ENCODE measurements at regions of chr2 and their contacts with region 1.

Region 1: DNA sequence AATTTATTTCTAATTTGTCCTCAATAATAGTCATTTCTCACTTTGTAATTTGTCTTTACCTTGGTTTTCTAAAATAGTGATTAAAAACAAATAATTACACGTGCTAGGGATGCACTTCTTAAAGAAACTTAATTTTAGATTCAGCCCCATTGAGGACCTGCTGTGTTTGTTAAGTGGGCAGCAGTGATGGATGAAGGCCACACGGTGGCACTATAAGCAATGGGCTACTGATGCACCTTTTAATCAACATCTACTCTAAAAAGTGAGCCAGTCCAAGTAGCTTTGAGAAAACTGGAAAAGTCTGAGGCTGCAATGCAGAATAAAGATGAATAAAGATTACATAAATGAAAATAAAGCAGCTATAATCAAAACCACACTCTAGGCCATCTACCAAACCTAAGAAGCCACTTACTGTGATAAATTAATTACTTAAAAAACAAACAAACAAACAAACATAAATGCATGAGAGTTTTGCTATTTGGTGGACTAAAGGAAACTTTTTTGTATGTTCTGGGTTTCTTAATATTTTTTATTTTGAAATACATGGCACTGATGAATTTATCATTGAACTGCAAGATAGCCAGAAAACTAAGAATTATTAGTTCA is 89.3 kb downstream of the PDE11A start:
- DNase-seq: peak; percentile 36
- H3K4me3 ChIP-seq: no peak overlapping the region
- H3K27ac ChIP-seq: no peak overlapping the region
- H3K4me1 ChIP-seq: no peaks in the 10 kb centered on the region
- H3K27me3 ChIP-seq: peaks cover 4% of the 10 kb centered on the region
- CTCF ChIP-seq: peak; percentile 95 to 96

Region 2: GRCh38 chr2:177906041-177906718 is 77.1 kb before region 1 on chr2:
- CTCF ChIA-PET with region 1: no interaction called
- dilution Hi-C with region 1: no loop called
- in situ Hi-C with region 1: no loop called
- intact Hi-C with region 1: loop called (anchors 5 kb)
- DNase-seq: peak; percentile 45
- H3K4me3 ChIP-seq: no peak overlapping the region
- H3K27ac ChIP-seq: no peak overlapping the region
- H3K4me1 ChIP-seq: peaks cover 12% of the 10 kb centered on the region
- H3K27me3 ChIP-seq: no peaks in the 10 kb centered on the region
- CTCF ChIP-seq: peak; percentile 89 to 94

Region 3: DNA sequence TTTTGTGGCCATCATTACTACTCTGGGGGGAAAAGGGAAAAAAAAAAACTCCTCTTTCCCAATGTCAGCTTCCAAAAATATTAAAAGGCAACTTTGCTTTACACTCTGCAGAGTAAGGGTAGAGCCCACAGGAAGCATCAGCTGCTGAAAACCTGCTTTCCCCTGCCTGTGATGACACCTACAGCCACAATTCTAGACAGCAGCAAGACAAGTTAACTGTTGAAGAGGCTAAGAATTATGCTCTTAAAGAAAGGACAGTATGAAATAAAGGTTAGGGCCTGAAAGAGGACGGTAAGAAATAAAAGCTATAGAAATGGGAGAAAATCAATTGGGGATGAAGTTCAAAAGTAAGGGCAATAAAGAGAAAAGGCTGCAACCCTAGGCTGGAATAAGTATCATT is 86.3 kb after region 1 on chr2:
- CTCF ChIA-PET with region 1: no interaction called
- dilution Hi-C with region 1: no loop called
- in situ Hi-C with region 1: no loop called
- intact Hi-C with region 1: loop called (anchors 1 kb)
- DNase-seq: no peak
- H3K4me3 ChIP-seq: no peak overlapping the region
- H3K27ac ChIP-seq: no peak overlapping the region
- H3K4me1 ChIP-seq: peaks cover 18% of the 10 kb centered on the region
- H3K27me3 ChIP-seq: no peaks in the 10 kb centered on the region
- CTCF ChIP-seq: peak in 1 of 2 donors; percentile 21

Region 4: GRCh38 chr2:178112202-178113152 is 129.2 kb after region 1 on chr2 and contains the start of gene RBM45:
- CTCF ChIA-PET with region 1: no interaction called
- dilution Hi-C with region 1: no loop called
- in situ Hi-C with region 1: no loop called
- intact Hi-C with region 1: loop called (anchors 1 kb)
- DNase-seq: peak; percentile 95
- H3K4me3 ChIP-seq: peak within 1 kb of the TSS; percentile 74 to 85 (median 75)
- H3K27ac ChIP-seq: peak within 1 kb of the TSS; percentile 22
- H3K4me1 ChIP-seq: peaks cover 17% of the 10 kb centered on the region
- H3K27me3 ChIP-seq: no peaks in the 10 kb centered on the region
- CTCF ChIP-seq: peak; percentile 94 to 100
- total RNA-seq, gene RBM45: 12.1 to 15.5 TPM

Measured in mammary epithelial cell (primary cell).